ENCODE measurements at regions of chrX and their contacts with region 1.

Region 1: GRCh38 chrX:49019599-49020249 is 17.7 kb upstream of the GRIPAP1 start:
- DNase-seq: no peak
- ATAC-seq: no peak
- H3K4me3 Mint-ChIP-seq: no peak overlapping the region
- H3K27ac Mint-ChIP-seq: no peak overlapping the region
- H3K4me1 Mint-ChIP-seq: peaks cover 3% of the 10 kb centered on the region
- H3K27me3 Mint-ChIP-seq: no peaks in the 10 kb centered on the region

Region 2: DNA sequence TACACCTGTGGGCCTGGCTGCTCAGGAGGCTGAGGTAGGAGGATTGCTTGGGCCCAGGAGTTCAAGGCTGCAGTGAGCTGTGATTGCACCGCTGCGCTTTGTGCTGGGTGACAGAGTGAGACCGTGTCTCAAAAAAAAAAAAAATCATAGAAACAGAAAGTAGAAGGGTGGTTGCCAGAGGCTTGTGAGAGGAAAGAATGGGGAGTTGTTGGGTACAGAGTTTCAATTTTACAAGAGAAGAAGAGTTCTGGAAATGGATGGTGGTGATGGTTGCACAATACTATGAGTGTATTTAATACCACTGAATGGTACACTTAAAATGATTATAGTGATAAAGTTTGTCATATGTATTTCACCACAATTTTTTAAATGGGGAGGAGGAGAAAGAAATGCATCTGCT is 268.4 kb before region 1 on chrX:
- CTCF ChIA-PET with region 1: no interaction called
- POLR2A ChIA-PET with region 1: interaction called, 10 read pairs
- intact Hi-C with region 1: no loop called
- DNase-seq: peak; percentile 40
- ATAC-seq: peak; percentile 97
- H3K4me3 Mint-ChIP-seq: no peak overlapping the region
- H3K27ac Mint-ChIP-seq: no peak overlapping the region
- H3K4me1 Mint-ChIP-seq: peaks cover 7% of the 10 kb centered on the region
- H3K27me3 Mint-ChIP-seq: no peaks in the 10 kb centered on the region

Region 3: DNA sequence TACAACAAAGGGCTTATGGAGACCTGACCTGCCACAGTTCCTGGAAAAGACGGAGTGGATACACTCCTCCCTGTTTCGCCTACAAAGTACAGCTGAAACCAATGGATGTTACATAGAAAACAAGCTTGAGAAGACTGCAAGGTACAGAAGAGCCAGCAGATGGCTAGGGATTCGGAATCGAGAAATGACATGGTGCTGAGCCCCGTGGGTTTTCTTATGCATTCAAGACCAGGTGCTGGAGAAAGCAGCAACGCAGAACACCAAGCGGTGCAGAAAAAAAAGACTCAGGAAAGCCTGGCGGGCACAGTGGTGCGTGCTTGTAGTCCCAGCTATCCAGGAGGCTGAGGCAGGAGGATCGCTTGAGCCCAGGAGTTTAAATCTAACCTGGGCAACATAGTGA is 136.0 kb before region 1 on chrX:
- CTCF ChIA-PET with region 1: no interaction called
- POLR2A ChIA-PET with region 1: no interaction called
- intact Hi-C with region 1: no loop called
- DNase-seq: no peak
- ATAC-seq: no peak
- H3K4me3 Mint-ChIP-seq: no peak overlapping the region
- H3K27ac Mint-ChIP-seq: no peak overlapping the region
- H3K4me1 Mint-ChIP-seq: no peaks in the 10 kb centered on the region
- H3K27me3 Mint-ChIP-seq: no peaks in the 10 kb centered on the region

Measured in activated CD4-positive, alpha-beta T cell treated with anti-CD3 and anti-CD28 coated beads for 36 hours (primary cell).